ENCODE measurements at regions of chr2 and their contacts with region 1.

Region 1: DNA sequence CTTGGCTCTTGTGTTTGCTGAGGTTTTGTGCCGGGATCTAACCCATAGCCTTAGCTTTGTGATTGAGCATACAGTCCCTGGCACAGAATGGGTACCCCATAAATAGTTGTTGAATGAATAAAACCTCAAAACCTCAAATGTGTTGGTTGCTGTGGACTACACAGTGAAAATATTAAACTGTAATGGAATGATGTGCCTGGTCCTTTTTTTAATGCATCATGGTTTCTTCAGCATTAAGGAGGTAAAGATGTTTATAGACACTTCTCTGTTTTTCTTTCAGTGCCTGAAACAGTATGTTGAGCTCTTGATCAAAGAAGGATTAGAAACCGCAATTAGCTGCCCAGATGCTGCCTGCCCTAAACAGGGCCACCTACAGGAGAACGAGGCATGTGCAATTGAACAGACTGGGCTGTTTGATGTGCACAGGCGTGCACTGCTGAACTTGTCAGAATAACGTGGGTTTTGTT is 97.0 kb downstream of the RNF144A start:
- DNase-seq: peak in 4 of 5 donors; percentile 33 to 57 (median 40)
- H3K4me3 ChIP-seq: no peak overlapping the region
- H3K4me3 Mint-ChIP-seq: peak overlapping the region in 1 of 8 donors; percentile 15
- H3K27ac ChIP-seq: no peak overlapping the region
- H3K27ac Mint-ChIP-seq: peak overlapping the region in 5 of 7 donors; percentile 36 to 61 (median 49)
- H3K4me1 ChIP-seq: peaks cover 15% of the 10 kb centered on the region
- H3K4me1 Mint-ChIP-seq: peaks cover 25 to 35% (median 26%) of the 10 kb centered on the region in 4 donors
- H3K27me3 ChIP-seq: no peaks in the 10 kb centered on the region
- H3K27me3 Mint-ChIP-seq: no peaks in the 10 kb centered on the region

Region 2: GRCh38 chr2:6764968-6765723 is 249.1 kb before region 1 on chr2:
- CTCF ChIA-PET with region 1: no interaction called
- POLR2A ChIA-PET with region 1: no interaction called
- intact Hi-C with region 1: no loop called
- DNase-seq: no peak
- H3K4me3 ChIP-seq: no peak overlapping the region
- H3K4me3 Mint-ChIP-seq: no peak overlapping the region
- H3K27ac ChIP-seq: no peak overlapping the region
- H3K27ac Mint-ChIP-seq: no peak overlapping the region
- H3K4me1 ChIP-seq: no peaks in the 10 kb centered on the region
- H3K4me1 Mint-ChIP-seq: no peaks in the 10 kb centered on the region
- H3K27me3 ChIP-seq: no peaks in the 10 kb centered on the region
- H3K27me3 Mint-ChIP-seq: no peaks in the 10 kb centered on the region

Region 3: GRCh38 chr2:6826081-6826913 is 187.9 kb before region 1 on chr2:
- CTCF ChIA-PET with region 1: interaction called, 8 read pairs
- POLR2A ChIA-PET with region 1: no interaction called
- intact Hi-C with region 1: loop called (anchors 10 kb)
- DNase-seq: peak; percentile 40 to 50 (median 46)
- H3K4me3 ChIP-seq: no peak overlapping the region
- H3K4me3 Mint-ChIP-seq: no peak overlapping the region
- H3K27ac ChIP-seq: no peak overlapping the region
- H3K27ac Mint-ChIP-seq: no peak overlapping the region
- H3K4me1 ChIP-seq: no peaks in the 10 kb centered on the region
- H3K4me1 Mint-ChIP-seq: peaks cover 8 to 12% (median 9%) of the 10 kb centered on the region in 4 donors
- H3K27me3 ChIP-seq: no peaks in the 10 kb centered on the region
- H3K27me3 Mint-ChIP-seq: no peaks in the 10 kb centered on the region

Region 4: GRCh38 chr2:6922201-6922685 is 92.0 kb before region 1 on chr2:
- CTCF ChIA-PET with region 1: interaction called, 11 read pairs
- POLR2A ChIA-PET with region 1: interaction called, 4 read pairs
- intact Hi-C with region 1: no loop called
- DNase-seq: no peak
- H3K4me3 ChIP-seq: no peak overlapping the region
- H3K4me3 Mint-ChIP-seq: no peak overlapping the region
- H3K27ac ChIP-seq: no peak overlapping the region
- H3K27ac Mint-ChIP-seq: peak overlapping the region in 1 of 7 donors; percentile 25
- H3K4me1 ChIP-seq: peaks cover 59% of the 10 kb centered on the region
- H3K4me1 Mint-ChIP-seq: peaks cover 45 to 87% (median 66%) of the 10 kb centered on the region in 4 donors
- H3K27me3 ChIP-seq: no peaks in the 10 kb centered on the region
- H3K27me3 Mint-ChIP-seq: no peaks in the 10 kb centered on the region

Region 5: GRCh38 chr2:6999211-6999877 is 14.9 kb before region 1 on chr2:
- CTCF ChIA-PET with region 1: interaction called, 12 read pairs
- POLR2A ChIA-PET with region 1: no interaction called
- intact Hi-C with region 1: no loop called
- DNase-seq: no peak
- H3K4me3 ChIP-seq: no peak overlapping the region
- H3K4me3 Mint-ChIP-seq: no peak overlapping the region
- H3K27ac ChIP-seq: no peak overlapping the region
- H3K27ac Mint-ChIP-seq: peak overlapping the region in 3 of 7 donors; percentile 19 to 29 (median 22)
- H3K4me1 ChIP-seq: no peaks in the 10 kb centered on the region
- H3K4me1 Mint-ChIP-seq: peaks cover 0 to 26% (median 5%) of the 10 kb centered on the region in 4 donors
- H3K27me3 ChIP-seq: no peaks in the 10 kb centered on the region
- H3K27me3 Mint-ChIP-seq: no peaks in the 10 kb centered on the region